ENCODE measurements at regions of chr14 and their contacts with region 1.

Region 1: DNA sequence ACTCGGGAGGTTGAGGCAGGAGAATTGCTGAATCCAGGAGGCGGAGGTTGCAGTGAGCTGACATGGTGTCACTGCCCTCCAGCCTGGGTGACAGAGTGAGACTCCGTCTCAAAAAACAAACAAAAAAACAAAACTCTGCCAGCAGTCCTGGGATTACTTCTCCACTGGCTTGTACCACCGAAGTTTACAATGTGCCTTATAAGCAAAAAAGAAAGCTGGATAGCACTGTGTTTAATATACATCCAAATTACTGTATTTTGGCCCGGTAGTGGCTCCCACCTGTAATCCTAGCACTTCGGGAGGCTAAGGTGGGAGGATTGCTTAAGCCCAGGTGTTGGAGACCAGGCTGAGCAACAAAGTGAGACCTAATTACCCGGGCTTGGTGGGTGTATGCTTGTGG is 16.7 kb downstream of the HOMEZ start:
- DNase-seq: no peak
- H3K4me3 ChIP-seq: no peak overlapping the region
- H3K4me3 Mint-ChIP-seq: no peak overlapping the region
- H3K27ac Mint-ChIP-seq: no peak overlapping the region
- H3K4me1 ChIP-seq: no peaks in the 10 kb centered on the region
- H3K4me1 Mint-ChIP-seq: no peaks in the 10 kb centered on the region
- H3K27me3 ChIP-seq: no peaks in the 10 kb centered on the region
- H3K27me3 Mint-ChIP-seq: peaks cover 3% of the 10 kb centered on the region
- CTCF ChIP-seq: no peak

Region 2: GRCh38 chr14:23301288-23301968 is 32.2 kb after region 1 on chr14:
- CTCF ChIA-PET with region 1: interaction called, 4 read pairs
- POLR2A ChIA-PET with region 1: no interaction called
- intact Hi-C with region 1: loop called (anchors 1 kb)
- DNase-seq: peak; percentile 97 to 99
- H3K4me3 ChIP-seq: peak overlapping the region; percentile 71
- H3K4me3 Mint-ChIP-seq: peak overlapping the region; percentile 100
- H3K27ac Mint-ChIP-seq: peak overlapping the region; percentile 90
- H3K4me1 ChIP-seq: peaks cover 18% of the 10 kb centered on the region; the same call in 1 of the 2 replicates
- H3K4me1 Mint-ChIP-seq: peaks cover 7% of the 10 kb centered on the region
- H3K27me3 ChIP-seq: no peaks in the 10 kb centered on the region
- H3K27me3 Mint-ChIP-seq: no peaks in the 10 kb centered on the region
- CTCF ChIP-seq: peak; percentile 66 to 74

Region 3: DNA sequence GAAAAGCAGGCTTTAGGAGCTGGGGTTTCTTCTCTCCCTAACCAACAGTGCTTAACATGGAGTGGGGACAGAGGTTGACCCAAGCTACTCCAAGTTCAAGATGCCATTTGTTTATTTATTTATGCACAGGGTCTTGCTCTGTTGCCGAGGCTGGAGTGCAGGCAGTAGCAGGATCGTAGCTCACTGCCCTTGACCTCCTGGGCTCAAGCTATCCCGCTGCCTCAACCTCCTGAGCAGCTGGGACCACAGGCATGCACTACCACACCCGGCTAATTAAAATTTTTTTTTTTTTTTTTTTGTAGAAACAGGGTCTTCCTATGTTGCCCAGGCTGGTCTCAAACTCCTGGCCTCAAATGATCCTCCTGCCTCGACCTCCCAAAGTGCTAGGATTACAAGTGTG is 285.1 kb after region 1 on chr14:
- CTCF ChIA-PET with region 1: no interaction called
- POLR2A ChIA-PET with region 1: interaction called, 14 read pairs
- intact Hi-C with region 1: no loop called
- DNase-seq: no peak
- H3K4me3 ChIP-seq: no peak overlapping the region
- H3K4me3 Mint-ChIP-seq: no peak overlapping the region
- H3K27ac Mint-ChIP-seq: no peak overlapping the region
- H3K4me1 ChIP-seq: 0 out of 2 replicates have a peak, but pooled peaks cover 11% of the 10 kb centered on the region
- H3K4me1 Mint-ChIP-seq: peaks cover 14% of the 10 kb centered on the region
- H3K27me3 ChIP-seq: no peaks in the 10 kb centered on the region
- H3K27me3 Mint-ChIP-seq: no peaks in the 10 kb centered on the region
- CTCF ChIP-seq: no peak